Activated naive CD4-positive, alpha-beta T cell treated with anti-CD3 and anti-CD28 coated beads for 36 hours (primary cell): ENCODE measurements at regions of chr6 and their contacts with region 1.

Region 1: DNA sequence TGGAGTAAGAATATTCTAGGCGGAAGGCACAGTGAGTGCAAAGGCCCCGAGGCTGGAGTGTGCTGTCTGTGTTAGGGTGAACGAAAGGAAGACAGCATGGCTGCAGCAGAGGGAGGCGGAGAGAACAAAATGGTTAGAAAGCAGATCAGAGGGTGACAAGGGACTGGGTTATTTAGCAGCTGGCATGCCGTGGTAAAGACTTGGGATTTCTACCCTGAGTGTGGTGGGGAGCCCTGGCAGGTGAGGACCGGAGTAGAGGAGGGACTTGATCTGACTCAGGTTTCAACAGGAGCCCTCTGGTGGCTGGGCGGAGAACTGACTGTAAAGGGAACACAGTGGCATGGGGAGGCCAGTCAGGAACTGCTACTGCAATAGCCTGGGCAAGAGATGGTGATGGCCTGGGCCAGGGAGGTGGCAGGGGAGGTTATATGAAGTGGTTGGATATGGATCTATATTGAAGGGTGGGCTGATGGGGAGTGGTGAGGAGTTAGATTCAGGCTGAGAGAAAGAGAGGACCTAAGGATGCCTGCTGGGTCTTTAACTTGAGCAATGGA is 38.0 kb downstream of the PIM1 start:
- DNase-seq: peak; percentile 98
- H3K4me3 Mint-ChIP-seq: no peak overlapping the region
- H3K27ac Mint-ChIP-seq: peak overlapping the region; percentile 73
- H3K4me1 Mint-ChIP-seq: peaks cover 69% of the 10 kb centered on the region
- H3K27me3 Mint-ChIP-seq: no peaks in the 10 kb centered on the region

Region 2: GRCh38 chr6:36765594-36766398 is 442.2 kb before region 1 on chr6:
- CTCF ChIA-PET with region 1: interaction called, 5 read pairs
- intact Hi-C with region 1: loop called (anchors 1 kb)
- DNase-seq: peak; percentile 91
- H3K4me3 Mint-ChIP-seq: no peak overlapping the region
- H3K27ac Mint-ChIP-seq: no peak overlapping the region
- H3K4me1 Mint-ChIP-seq: peaks cover 27% of the 10 kb centered on the region
- H3K27me3 Mint-ChIP-seq: no peaks in the 10 kb centered on the region

Region 3: DNA sequence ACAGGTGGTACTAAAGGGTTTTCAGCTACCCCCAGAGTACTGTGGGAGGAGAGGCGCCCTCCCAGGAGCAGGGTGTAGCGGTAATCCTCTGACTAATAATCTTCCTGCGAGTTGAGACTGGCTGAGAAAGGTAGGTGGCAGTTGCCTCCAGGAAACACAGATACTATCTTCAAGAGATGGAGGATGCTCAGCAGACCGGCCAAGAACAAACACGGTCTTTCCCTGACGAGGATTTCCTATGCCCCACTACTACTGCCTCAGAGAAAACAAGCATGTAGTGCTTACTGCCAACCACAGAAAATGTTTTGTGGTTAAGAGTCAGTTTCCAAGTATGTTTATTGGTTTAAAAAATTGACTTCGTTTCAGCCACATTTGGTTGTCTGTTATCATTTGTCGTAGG is 295.4 kb before region 1 on chr6:
- CTCF ChIA-PET with region 1: interaction called, 4 read pairs
- intact Hi-C with region 1: loop called (anchors 1 kb)
- DNase-seq: peak; percentile 72
- H3K4me3 Mint-ChIP-seq: peak overlapping the region; percentile 5
- H3K27ac Mint-ChIP-seq: peak overlapping the region; percentile 71
- H3K4me1 Mint-ChIP-seq: peaks cover 40% of the 10 kb centered on the region
- H3K27me3 Mint-ChIP-seq: no peaks in the 10 kb centered on the region

Region 4: DNA sequence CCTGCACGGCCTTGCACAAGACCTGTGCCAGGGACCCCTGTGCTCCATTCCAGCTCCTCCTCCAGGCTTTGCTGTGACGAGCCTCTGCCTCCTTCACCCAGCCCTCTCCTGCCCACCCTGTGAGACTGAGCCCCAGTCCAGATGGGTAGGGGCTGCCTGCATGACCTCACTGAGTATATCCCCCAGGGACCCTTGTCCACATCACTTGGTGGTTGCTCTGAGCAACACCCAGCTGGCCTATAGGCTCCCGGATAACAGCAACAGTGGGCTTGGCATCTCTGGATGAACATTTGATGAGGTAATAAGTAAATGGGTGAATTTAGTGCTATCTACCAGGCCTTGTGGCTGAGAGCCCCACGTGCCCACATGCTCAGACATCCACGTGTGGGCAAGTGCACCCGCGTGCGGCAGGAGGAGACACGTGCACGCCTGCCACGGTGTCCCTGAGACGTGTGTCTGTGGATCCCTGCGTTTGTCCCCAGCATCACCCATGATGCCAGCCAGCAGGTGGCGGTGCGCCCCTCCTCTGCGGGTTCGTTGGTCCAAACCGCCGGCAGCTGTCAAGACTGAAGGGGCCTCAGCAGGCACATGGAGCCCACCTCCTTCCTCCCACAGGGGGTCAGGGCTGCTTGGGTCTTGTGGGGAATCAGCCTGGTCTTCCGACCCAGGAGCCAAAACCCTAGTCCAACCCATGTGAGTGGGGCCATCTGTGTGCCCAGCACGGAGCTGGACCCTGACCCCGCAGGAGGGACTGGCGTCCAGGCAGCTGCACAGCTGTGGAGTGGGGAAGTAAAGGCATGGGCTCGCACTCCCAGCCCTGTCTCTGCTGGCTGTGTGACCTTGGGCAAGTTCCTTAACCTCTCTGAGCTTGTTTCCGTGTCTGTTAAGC is 156.6 kb before region 1 on chr6:
- CTCF ChIA-PET with region 1: interaction called, 216 read pairs
- intact Hi-C with region 1: loop called (anchors 1 kb)
- DNase-seq: peak; percentile 96
- H3K4me3 Mint-ChIP-seq: peak overlapping the region; percentile 86
- H3K27ac Mint-ChIP-seq: peak overlapping the region; percentile 99
- H3K4me1 Mint-ChIP-seq: peaks cover 56% of the 10 kb centered on the region
- H3K27me3 Mint-ChIP-seq: no peaks in the 10 kb centered on the region

Region 5: GRCh38 chr6:37182736-37183590 is 25.0 kb before region 1 on chr6:
- CTCF ChIA-PET with region 1: interaction called, 173 read pairs
- intact Hi-C with region 1: loop called (anchors 1 kb)
- DNase-seq: peak; percentile 83
- H3K4me3 Mint-ChIP-seq: peak overlapping the region; percentile 34
- H3K27ac Mint-ChIP-seq: peak overlapping the region; percentile 95
- H3K4me1 Mint-ChIP-seq: peaks cover 59% of the 10 kb centered on the region
- H3K27me3 Mint-ChIP-seq: no peaks in the 10 kb centered on the region

Region 6: DNA sequence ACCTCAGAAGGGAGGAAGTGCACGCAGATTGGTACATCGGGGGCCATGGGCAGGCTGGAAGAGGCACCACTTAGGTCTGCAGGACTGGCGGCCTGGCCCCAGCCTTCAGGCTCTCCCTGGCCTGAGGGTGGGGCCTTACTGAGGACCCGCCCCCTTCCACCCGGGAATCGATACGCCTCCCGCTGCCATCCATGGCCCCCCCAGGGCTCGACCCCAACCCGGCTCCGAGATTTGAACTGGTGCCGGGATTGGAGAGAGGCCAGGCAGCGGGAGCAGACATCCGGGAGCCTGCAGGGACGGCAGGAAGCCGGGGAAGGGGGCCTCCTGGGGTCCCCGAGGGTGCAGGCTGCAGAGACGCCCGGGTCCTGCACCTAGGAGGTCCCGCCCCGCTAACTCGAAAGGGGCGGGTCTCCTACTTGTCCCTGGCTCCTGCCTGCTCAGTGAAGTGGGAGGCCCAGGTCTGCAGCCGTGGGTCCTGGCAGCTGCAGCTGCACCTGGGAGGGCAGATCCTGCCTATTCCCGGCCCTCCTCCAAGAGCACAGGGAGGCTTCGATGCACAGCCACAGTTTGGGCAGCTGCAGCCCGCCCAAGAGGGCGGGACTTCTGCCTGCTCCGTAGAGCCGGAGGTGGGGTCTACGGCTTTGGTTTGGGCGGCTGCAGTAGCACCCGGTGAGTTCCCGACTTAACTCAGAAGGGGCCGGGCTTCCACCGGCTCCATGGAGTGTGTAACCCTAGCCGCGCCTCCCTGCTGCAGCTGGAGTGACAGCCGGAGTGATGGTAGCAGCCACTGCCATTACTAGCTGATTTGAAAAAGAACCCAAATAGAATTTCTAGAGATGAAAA is 14.4 kb after region 1 on chr6:
- CTCF ChIA-PET with region 1: interaction called, 17 read pairs
- intact Hi-C with region 1: no loop called
- DNase-seq: peak; percentile 90
- H3K4me3 Mint-ChIP-seq: peak overlapping the region; percentile 56
- H3K27ac Mint-ChIP-seq: peak overlapping the region; percentile 26
- H3K4me1 Mint-ChIP-seq: peaks cover 24% of the 10 kb centered on the region
- H3K27me3 Mint-ChIP-seq: no peaks in the 10 kb centered on the region

Region 7: GRCh38 chr6:37456816-37457560 is 249.0 kb after region 1 on chr6:
- CTCF ChIA-PET with region 1: no interaction called
- intact Hi-C with region 1: no loop called
- DNase-seq: no peak
- H3K4me3 Mint-ChIP-seq: no peak overlapping the region
- H3K27ac Mint-ChIP-seq: no peak overlapping the region
- H3K4me1 Mint-ChIP-seq: peaks cover 6% of the 10 kb centered on the region
- H3K27me3 Mint-ChIP-seq: no peaks in the 10 kb centered on the region